ENCODE measurements at regions of chr3 and their contacts with region 1.

Region 1: GRCh38 chr3:111071257-111072015 is at the start of gene NECTIN3:
- DNase-seq: peak; percentile 77
- H3K4me3 Mint-ChIP-seq: peak within 1 kb of the TSS; percentile 91
- H3K27ac Mint-ChIP-seq: peak within 1 kb of the TSS; percentile 90
- H3K4me1 Mint-ChIP-seq: peaks cover 28% of the 10 kb centered on the region
- H3K27me3 Mint-ChIP-seq: peaks cover 55% of the 10 kb centered on the region
- total RNA-seq, gene NECTIN3: 3.5 and 4.6 TPM in 2 replicates

Region 2: GRCh38 chr3:109806929-109807328 is 1264.5 kb before region 1 on chr3:
- intact Hi-C with region 1: loop called (anchors 5 kb)
- DNase-seq: peak; percentile 30
- H3K4me3 Mint-ChIP-seq: peak overlapping the region; percentile 35
- H3K27ac Mint-ChIP-seq: peak overlapping the region; percentile 67
- H3K4me1 Mint-ChIP-seq: peaks cover 39% of the 10 kb centered on the region
- H3K27me3 Mint-ChIP-seq: peaks cover 8% of the 10 kb centered on the region

Region 3: DNA sequence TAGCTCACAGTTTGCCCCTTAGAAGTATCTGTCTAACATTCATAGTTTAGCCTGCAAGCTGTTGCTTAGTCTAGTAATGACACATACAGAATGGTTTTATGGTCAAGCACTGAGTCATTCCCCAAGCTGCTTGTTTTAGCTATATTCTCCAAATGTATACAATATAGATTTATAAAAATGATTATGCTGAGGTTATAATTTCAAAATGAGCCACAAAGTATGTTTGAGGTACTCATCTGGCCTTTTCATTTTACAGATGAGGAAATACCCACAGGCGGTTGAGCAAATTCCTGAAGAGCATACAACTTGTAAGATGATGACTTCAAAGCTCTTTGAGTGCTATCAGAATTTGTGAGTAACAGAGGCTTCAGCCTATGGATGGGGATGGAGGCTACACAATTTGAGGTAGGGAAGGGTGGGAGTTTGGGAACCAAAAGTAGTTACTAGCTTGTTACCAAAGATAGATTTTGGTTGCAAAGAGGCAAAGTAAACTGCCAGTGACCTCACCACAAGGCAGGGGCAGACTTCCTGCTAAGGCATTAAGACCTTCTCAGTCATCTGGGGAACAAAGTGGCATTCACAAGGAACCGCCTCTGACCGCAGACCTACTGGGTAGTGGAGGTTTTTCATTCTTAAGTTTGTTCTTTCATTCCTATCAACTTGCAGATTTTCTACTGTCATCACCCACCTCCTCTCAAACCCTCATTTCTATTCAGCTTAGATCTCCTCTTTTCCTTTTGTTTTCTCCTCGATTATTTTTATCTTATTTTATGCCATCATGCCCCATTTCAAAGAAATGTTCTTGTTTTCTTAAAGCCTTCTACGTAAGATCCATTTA is 257.0 kb before region 1 on chr3:
- intact Hi-C with region 1: loop called (anchors 2 kb)
- DNase-seq: peak; percentile 9
- H3K4me3 Mint-ChIP-seq: peak overlapping the region; percentile 37
- H3K27ac Mint-ChIP-seq: peak overlapping the region; percentile 70
- H3K4me1 Mint-ChIP-seq: peaks cover 22% of the 10 kb centered on the region
- H3K27me3 Mint-ChIP-seq: peaks cover 11% of the 10 kb centered on the region

Region 4: DNA sequence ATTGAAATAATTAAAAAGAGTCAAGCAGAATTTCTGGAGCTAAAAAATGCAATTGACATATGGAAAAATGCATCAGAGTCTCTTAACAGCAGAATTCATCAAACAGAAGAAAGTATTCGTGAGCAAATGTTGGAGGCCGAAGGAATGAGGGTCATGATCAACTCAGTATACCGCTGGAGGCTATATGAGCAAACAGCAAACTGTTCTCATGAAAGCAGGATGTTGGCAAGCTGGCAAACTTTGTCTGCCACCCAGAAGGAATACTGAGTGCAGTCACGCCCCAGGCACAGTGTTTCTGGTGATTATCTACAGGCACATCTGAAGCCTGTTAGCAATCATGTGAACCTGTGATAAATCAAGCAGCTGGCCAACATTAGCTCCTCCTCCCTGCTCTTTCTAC is 86.6 kb before region 1 on chr3:
- intact Hi-C with region 1: no loop called
- DNase-seq: no peak
- H3K4me3 Mint-ChIP-seq: no peak overlapping the region
- H3K27ac Mint-ChIP-seq: no peak overlapping the region
- H3K4me1 Mint-ChIP-seq: no peaks in the 10 kb centered on the region
- H3K27me3 Mint-ChIP-seq: peaks cover 3% of the 10 kb centered on the region

Region 5: GRCh38 chr3:111610189-111610588 is 538.8 kb after region 1 on chr3:
- intact Hi-C with region 1: loop called (anchors 5 kb)
- DNase-seq: peak; percentile 61
- H3K4me3 Mint-ChIP-seq: peak overlapping the region; percentile 69
- H3K27ac Mint-ChIP-seq: peak overlapping the region; percentile 98
- H3K4me1 Mint-ChIP-seq: peaks cover 98% of the 10 kb centered on the region
- H3K27me3 Mint-ChIP-seq: no peaks in the 10 kb centered on the region

Region 6: GRCh38 chr3:112498914-112499711 is 1427.7 kb after region 1 on chr3 and contains the start of gene BTLA:
- intact Hi-C with region 1: loop called (anchors 10 kb)
- DNase-seq: peak; percentile 35
- H3K4me3 Mint-ChIP-seq: peak within 1 kb of the TSS; percentile 95
- H3K27ac Mint-ChIP-seq: peak within 1 kb of the TSS; percentile 97
- H3K4me1 Mint-ChIP-seq: peaks cover 67% of the 10 kb centered on the region
- H3K27me3 Mint-ChIP-seq: no peaks in the 10 kb centered on the region
- total RNA-seq, gene BTLA: 39.4 and 40.7 TPM in 2 replicates